Mammary epithelial cell (primary cell): ENCODE measurements at regions of chr12 and their contacts with region 1.

Region 1: DNA sequence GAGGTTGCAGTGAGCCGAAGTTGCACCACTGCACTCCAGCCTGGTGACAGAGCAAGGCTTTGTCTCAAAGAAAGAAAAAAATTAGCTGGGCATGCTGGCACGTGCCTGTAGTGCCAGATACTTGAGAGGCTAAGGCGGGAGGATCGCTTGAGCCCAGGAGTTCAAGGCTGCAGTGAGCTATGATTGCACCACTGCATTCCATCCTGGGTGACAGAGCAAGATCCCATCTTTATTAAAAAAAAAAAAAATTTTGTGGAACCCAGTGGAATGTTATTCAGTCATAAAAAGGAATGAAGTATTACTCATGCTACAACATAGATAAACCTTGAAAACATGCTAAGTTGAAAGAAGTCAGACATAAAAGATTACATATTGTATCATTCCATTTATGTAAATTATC is 8.3 kb upstream of the ERBB3 start:
- DNase-seq: peak; percentile 66
- H3K4me3 ChIP-seq: no peak overlapping the region
- H3K27ac ChIP-seq: no peak overlapping the region
- H3K4me1 ChIP-seq: peaks cover 5% of the 10 kb centered on the region
- H3K27me3 ChIP-seq: no peaks in the 10 kb centered on the region
- CTCF ChIP-seq: no peak

Region 2: GRCh38 chr12:55931780-55932550 is 139.7 kb before region 1 on chr12:
- CTCF ChIA-PET with region 1: interaction called, 10 read pairs
- dilution Hi-C with region 1: no loop called
- in situ Hi-C with region 1: no loop called
- intact Hi-C with region 1: no loop called
- DNase-seq: no peak
- H3K4me3 ChIP-seq: peak overlapping the region; percentile 63 to 95 (median 92)
- H3K27ac ChIP-seq: peak overlapping the region; percentile 95
- H3K4me1 ChIP-seq: peaks cover 67% of the 10 kb centered on the region
- H3K27me3 ChIP-seq: no peaks in the 10 kb centered on the region
- CTCF ChIP-seq: no peak

Region 3: DNA sequence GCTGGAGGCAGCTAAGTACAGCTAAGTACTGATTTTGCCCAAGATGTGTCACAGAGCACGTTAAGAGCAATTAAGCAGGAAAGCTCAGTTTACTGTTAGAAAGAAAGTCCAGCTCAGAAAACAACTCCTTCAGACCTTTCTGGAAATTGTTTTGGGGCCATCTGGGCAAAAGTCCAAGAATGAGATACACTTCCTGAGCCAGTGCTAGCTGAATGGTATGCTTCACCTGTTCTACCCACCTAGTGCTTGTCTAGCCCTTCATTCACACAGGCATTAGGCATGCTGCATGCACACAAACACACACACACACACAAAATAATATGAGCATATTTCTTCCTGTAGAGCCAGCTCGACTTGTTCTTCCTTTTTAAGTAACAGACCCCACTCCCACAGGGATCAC is 57.4 kb before region 1 on chr12:
- CTCF ChIA-PET with region 1: no interaction called
- dilution Hi-C with region 1: loop called (anchors 5 kb)
- in situ Hi-C with region 1: no loop called
- intact Hi-C with region 1: no loop called
- DNase-seq: no peak
- H3K4me3 ChIP-seq: no peak overlapping the region
- H3K27ac ChIP-seq: no peak overlapping the region
- H3K4me1 ChIP-seq: no peaks in the 10 kb centered on the region
- H3K27me3 ChIP-seq: no peaks in the 10 kb centered on the region
- CTCF ChIP-seq: no peak